Aorta (tissue), 5 donors: ENCODE measurements at regions of chr5 and their contacts with region 1.

Region 1: DNA sequence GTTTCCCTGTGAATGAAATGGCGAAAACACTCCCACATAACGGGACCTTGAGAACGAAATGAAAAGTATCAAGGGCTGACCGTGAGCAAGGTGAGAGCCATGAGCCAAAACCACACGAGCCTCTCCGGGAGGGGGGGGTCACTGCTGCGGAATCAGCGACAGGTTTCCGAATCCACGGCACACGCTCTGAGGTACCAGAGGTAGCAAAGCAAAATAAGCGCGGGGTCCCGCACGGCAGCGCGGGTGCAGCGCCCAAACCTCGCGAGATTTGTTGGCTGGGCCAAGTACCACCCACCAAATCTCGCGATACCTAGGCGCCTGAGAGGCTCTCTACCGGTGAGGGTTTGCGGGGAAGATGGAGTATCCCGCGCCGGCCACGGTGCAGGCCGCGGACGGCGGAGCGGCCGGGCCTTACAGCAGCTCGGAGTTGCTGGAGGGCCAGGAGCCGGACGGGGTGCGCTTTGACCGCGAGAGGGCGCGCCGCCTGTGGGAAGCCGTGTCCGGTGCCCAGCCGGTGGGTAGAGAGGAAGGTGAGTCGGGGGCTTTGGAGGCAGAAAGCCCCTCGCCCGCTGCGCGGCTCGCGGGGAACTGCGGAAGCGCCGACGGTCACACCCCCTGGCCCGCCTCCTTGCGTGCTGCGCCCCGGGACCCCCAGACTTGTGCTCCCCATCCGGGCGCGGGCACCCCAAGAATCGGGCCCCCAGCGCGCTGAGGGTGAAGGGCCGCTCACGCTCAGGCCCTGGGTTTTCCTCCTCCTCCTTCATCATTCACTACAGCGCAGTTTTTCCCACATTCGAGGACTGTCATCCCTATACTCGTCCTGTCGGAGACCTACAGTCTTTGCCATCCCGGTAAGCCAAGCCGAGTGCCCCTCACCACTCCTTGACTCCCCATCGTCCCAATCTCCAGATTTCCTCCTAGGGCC is at the start of gene ZNF346:
- DNase-seq: peak; percentile 95 to 96
- ATAC-seq: peak; percentile 98
- H3K4me3 ChIP-seq: peak within 1 kb of the TSS; percentile 78 to 80
- H3K27ac ChIP-seq: peak within 1 kb of the TSS; percentile 48 to 53
- H3K4me1 ChIP-seq: peaks cover 0 to 1% of the 10 kb centered on the region in 2 donors
- H3K27me3 ChIP-seq: no peaks in the 10 kb centered on the region
- total RNA-seq, gene ZNF346: 16.8 to 25.7 TPM

Region 2: DNA sequence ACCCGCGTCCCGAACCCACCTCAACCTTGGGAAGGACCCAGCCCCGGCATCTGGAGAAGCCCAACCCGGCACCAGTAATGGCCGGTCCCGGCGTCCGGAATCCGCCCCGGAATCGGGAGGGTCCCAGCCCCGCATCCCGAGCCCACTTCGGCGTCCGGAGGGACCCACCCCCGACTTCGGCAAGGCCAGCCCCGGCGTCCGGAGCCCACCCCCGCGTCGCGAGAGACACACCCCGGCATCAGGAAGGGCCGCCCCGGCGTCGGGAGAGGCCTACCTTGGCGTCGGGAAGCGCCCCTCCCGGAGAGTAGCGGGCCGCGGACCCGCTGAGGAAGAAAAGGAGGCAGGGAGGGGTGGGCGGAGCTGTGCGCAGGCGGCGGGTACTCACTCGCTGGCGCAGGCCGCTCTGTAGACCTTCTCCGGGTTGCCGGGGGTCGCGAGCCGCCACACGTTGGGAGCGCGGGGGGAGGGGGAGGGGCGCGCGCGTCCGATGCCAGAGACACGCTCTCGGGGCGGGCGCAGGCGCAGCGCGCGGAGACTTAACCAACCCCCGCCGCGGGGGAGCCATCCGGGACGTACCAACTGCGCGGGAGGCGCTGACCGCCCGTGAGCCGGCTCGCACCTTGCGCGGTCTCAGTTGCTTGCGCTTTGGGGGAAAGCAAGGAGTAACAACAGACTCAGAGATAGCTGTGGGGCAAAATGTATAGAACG is 16.2 kb before region 1 on chr5 and contains the start of gene UIMC1:
- intact Hi-C with region 1: loop called (anchors 2 kb)
- DNase-seq: peak; percentile 92 to 98
- ATAC-seq: peak; percentile 98
- H3K4me3 ChIP-seq: peak within 1 kb of the TSS; percentile 71 to 89
- H3K27ac ChIP-seq: peak within 1 kb of the TSS; percentile 23 to 58
- H3K4me1 ChIP-seq: peaks cover 0 to 3% of the 10 kb centered on the region in 2 donors
- H3K27me3 ChIP-seq: no peaks in the 10 kb centered on the region
- total RNA-seq, gene UIMC1: 53.9 to 54.8 TPM